ENCODE measurements at regions of chr12 and their contacts with region 1.

Region 1: DNA sequence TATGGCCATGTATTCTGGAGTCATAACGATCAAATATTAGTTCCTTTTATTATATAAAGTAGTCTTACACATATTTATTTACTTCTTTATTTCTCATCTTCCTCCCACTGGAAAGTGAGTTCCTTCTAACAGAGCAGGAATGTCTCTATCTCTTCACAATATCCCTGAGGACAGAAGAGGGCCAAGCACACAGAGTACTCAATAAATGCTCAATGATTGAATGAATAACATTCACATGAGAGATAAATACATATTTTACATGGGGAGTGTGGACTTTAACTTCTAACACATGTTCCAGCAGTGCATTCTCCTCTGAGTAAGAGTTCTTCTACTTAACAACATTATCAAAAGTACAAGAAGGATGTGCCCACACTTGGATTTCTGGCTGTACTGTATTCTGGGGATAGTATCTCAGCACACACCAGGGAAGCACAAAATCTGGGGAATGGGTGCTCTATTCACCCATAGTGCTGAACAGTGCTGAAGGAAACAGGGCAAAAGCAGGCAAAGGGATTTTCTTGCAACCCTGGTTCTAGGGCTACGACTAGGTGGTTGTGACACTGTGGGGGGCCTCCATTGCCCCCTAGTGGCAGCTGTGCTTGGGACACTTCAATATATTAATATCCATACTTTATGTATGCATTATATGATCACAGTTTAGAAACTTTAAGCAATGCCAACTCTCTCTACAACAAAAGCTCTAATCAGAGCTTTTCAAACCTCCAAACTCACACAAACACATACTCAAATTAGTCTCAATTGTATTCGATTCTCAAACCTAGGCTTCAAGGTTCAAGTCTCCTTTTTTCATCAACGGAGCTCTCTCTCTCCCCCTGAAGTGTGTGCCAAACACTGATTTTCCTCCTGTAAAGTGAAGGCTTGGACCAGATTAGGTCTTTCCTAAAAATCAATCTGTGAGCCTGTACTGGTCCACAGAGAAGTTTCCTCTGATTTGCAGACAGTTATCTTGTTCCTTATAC is 115.5 kb downstream of the SLC2A13 start:
- DNase-seq: peak; percentile 18 to 66 (median 59)
- ATAC-seq: peak; percentile 87
- H3K4me3 ChIP-seq: no peak overlapping the region
- H3K4me3 Mint-ChIP-seq: no peak overlapping the region
- H3K27ac ChIP-seq: no peak overlapping the region
- H3K27ac Mint-ChIP-seq: no peak overlapping the region
- H3K4me1 ChIP-seq: no peaks in the 10 kb centered on the region
- H3K4me1 Mint-ChIP-seq: peaks cover 7% of the 10 kb centered on the region
- H3K27me3 ChIP-seq: no peaks in the 10 kb centered on the region
- H3K27me3 Mint-ChIP-seq: no peaks in the 10 kb centered on the region
- CTCF ChIP-seq: peak; percentile 93

Region 2: DNA sequence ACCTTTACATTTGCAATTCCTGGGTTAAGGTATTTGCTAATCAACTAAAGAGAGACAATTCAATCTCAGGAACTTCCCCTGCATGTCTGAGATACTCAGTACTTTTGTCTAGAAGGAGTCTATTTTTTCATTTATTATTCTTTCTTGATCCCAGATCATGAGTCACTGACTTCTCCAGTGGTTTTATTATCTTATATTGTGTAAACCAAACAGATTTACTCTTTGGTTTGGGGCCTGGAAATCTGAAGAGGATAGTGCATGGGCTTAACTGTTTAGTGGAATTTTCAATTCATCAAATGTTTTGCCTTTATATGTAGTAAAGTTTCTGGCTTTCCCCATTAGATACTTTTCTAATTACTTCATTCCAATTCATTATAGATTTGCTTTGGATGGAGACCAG is 1488.4 kb before region 1 on chr12:
- CTCF ChIA-PET with region 1: no interaction called
- POLR2A ChIA-PET with region 1: no interaction called
- intact Hi-C with region 1: no loop called
- DNase-seq: no peak
- ATAC-seq: no peak
- H3K4me3 ChIP-seq: no peak overlapping the region
- H3K4me3 Mint-ChIP-seq: no peak overlapping the region
- H3K27ac ChIP-seq: no peak overlapping the region
- H3K27ac Mint-ChIP-seq: no peak overlapping the region
- H3K4me1 ChIP-seq: no peaks in the 10 kb centered on the region
- H3K4me1 Mint-ChIP-seq: no peaks in the 10 kb centered on the region
- H3K27me3 ChIP-seq: no peaks in the 10 kb centered on the region
- H3K27me3 Mint-ChIP-seq: no peaks in the 10 kb centered on the region
- CTCF ChIP-seq: no peak

Region 3: DNA sequence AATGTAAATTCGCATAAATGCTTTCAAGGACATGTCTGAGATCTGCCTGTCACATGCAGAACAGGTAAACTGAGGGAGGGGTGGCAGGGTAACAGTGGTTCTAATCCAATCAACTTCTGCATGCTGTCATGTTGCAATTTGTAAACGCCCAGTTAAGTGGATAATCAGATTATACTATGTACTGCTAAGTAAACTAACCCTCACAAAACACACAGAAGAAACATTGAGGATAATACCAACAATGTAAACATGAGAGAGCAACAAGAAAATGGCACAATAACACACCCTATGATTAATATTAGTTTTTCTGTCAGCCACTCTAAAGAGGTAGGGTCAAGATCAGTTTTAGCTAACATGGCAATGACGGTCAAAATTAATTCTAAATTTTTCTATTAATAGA is 671.2 kb before region 1 on chr12:
- CTCF ChIA-PET with region 1: interaction called, 11 read pairs
- POLR2A ChIA-PET with region 1: no interaction called
- intact Hi-C with region 1: loop called in 1 of 2 experiments (anchors 2 kb)
- DNase-seq: no peak
- ATAC-seq: no peak
- H3K4me3 ChIP-seq: no peak overlapping the region
- H3K4me3 Mint-ChIP-seq: no peak overlapping the region
- H3K27ac ChIP-seq: no peak overlapping the region
- H3K27ac Mint-ChIP-seq: no peak overlapping the region
- H3K4me1 ChIP-seq: no peaks in the 10 kb centered on the region
- H3K4me1 Mint-ChIP-seq: no peaks in the 10 kb centered on the region
- H3K27me3 ChIP-seq: no peaks in the 10 kb centered on the region
- H3K27me3 Mint-ChIP-seq: no peaks in the 10 kb centered on the region
- CTCF ChIP-seq: no peak

Region 4: GRCh38 chr12:39365364-39366001 is 624.9 kb before region 1 on chr12:
- CTCF ChIA-PET with region 1: no interaction called
- POLR2A ChIA-PET with region 1: no interaction called
- intact Hi-C with region 1: loop called in 1 of 2 experiments (anchors 2 kb)
- DNase-seq: no peak
- ATAC-seq: no peak
- H3K4me3 ChIP-seq: no peak overlapping the region
- H3K4me3 Mint-ChIP-seq: no peak overlapping the region
- H3K27ac ChIP-seq: no peak overlapping the region
- H3K27ac Mint-ChIP-seq: no peak overlapping the region
- H3K4me1 ChIP-seq: no peaks in the 10 kb centered on the region
- H3K4me1 Mint-ChIP-seq: no peaks in the 10 kb centered on the region
- H3K27me3 ChIP-seq: no peaks in the 10 kb centered on the region
- H3K27me3 Mint-ChIP-seq: no peaks in the 10 kb centered on the region
- CTCF ChIP-seq: no peak

Region 5: GRCh38 chr12:39426636-39427245 is 563.7 kb before region 1 on chr12:
- CTCF ChIA-PET with region 1: no interaction called
- POLR2A ChIA-PET with region 1: no interaction called
- intact Hi-C with region 1: no loop called
- DNase-seq: no peak
- ATAC-seq: no peak
- H3K4me3 ChIP-seq: no peak overlapping the region
- H3K4me3 Mint-ChIP-seq: no peak overlapping the region
- H3K27ac ChIP-seq: no peak overlapping the region
- H3K27ac Mint-ChIP-seq: no peak overlapping the region
- H3K4me1 ChIP-seq: no peaks in the 10 kb centered on the region
- H3K4me1 Mint-ChIP-seq: peaks cover 2% of the 10 kb centered on the region
- H3K27me3 ChIP-seq: no peaks in the 10 kb centered on the region
- H3K27me3 Mint-ChIP-seq: no peaks in the 10 kb centered on the region
- CTCF ChIP-seq: no peak

Region 6: DNA sequence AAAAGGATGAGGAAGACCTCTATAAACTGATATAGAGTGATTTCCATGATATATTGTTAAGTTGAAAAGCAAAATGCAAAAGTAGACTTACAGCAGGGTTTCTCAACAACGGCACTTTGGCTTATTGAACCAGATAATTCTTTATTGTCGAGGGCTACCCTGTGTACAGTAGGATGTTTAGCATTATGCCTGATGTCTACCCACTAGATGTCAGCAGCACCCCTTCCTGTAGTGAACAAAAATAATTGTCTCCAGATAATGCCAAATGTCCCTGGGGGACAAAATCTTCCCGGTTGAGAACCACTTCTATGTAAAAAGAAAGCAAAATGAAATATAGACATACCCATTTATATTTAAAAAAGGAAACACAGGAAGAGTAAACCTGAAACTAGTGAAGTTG is 403.2 kb before region 1 on chr12:
- CTCF ChIA-PET with region 1: interaction called, 6 read pairs
- POLR2A ChIA-PET with region 1: no interaction called
- intact Hi-C with region 1: loop called (anchors 1 to 2 kb)
- DNase-seq: peak in 5 of 9 experiments; percentile 1 to 67 (median 19)
- ATAC-seq: peak; percentile 75
- H3K4me3 ChIP-seq: no peak overlapping the region
- H3K4me3 Mint-ChIP-seq: no peak overlapping the region
- H3K27ac ChIP-seq: no peak overlapping the region
- H3K27ac Mint-ChIP-seq: no peak overlapping the region
- H3K4me1 ChIP-seq: no peaks in the 10 kb centered on the region
- H3K4me1 Mint-ChIP-seq: peaks cover 14% of the 10 kb centered on the region
- H3K27me3 ChIP-seq: no peaks in the 10 kb centered on the region
- H3K27me3 Mint-ChIP-seq: no peaks in the 10 kb centered on the region
- CTCF ChIP-seq: peak; percentile 53

Region 7: DNA sequence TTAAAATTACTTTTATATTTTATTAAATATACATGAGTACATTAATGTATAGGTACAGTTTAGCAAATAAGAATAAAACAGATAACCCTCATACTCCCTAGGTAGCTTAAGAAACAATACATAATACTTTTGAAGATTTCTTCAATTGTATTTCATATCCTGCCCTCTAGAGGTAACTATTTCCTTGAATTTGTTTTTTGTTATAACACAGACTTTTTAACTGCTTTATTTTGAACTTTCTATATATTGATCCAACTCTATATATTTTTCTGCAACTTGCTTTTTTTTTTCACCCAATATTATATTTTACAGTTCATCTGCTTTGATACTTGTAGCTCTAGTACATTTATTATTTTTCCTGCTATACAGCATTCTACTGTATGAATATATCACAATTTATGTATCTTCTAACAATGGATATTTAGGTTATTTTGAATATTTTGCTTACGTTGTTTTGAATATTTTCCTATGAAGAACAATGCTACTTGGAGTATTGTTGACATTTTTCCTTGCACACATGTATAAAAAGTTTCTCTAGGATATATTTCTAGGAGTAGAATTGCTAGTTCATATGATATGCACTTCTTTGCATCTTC is 298.1 kb before region 1 on chr12:
- CTCF ChIA-PET with region 1: no interaction called
- POLR2A ChIA-PET with region 1: no interaction called
- intact Hi-C with region 1: loop called in 1 of 2 experiments (anchors 5 kb)
- DNase-seq: peak in 2 of 9 experiments; percentile 23 to 47
- ATAC-seq: peak; percentile 58
- H3K4me3 ChIP-seq: no peak overlapping the region
- H3K4me3 Mint-ChIP-seq: no peak overlapping the region
- H3K27ac ChIP-seq: no peak overlapping the region
- H3K27ac Mint-ChIP-seq: no peak overlapping the region
- H3K4me1 ChIP-seq: peaks cover 7% of the 10 kb centered on the region
- H3K4me1 Mint-ChIP-seq: peaks cover 6% of the 10 kb centered on the region
- H3K27me3 ChIP-seq: no peaks in the 10 kb centered on the region
- H3K27me3 Mint-ChIP-seq: no peaks in the 10 kb centered on the region
- CTCF ChIP-seq: peak; percentile 61

Region 8: GRCh38 chr12:39764944-39765560 is 225.4 kb before region 1 on chr12:
- CTCF ChIA-PET with region 1: interaction called, 3 read pairs
- POLR2A ChIA-PET with region 1: no interaction called
- intact Hi-C with region 1: loop called (anchors 2 to 5 kb)
- DNase-seq: peak in 2 of 9 experiments; percentile 19 to 37
- ATAC-seq: no peak
- H3K4me3 ChIP-seq: no peak overlapping the region
- H3K4me3 Mint-ChIP-seq: no peak overlapping the region
- H3K27ac ChIP-seq: no peak overlapping the region
- H3K27ac Mint-ChIP-seq: no peak overlapping the region
- H3K4me1 ChIP-seq: no peaks in the 10 kb centered on the region
- H3K4me1 Mint-ChIP-seq: no peaks in the 10 kb centered on the region
- H3K27me3 ChIP-seq: no peaks in the 10 kb centered on the region
- H3K27me3 Mint-ChIP-seq: no peaks in the 10 kb centered on the region
- CTCF ChIP-seq: peak; percentile 63

Region 9: DNA sequence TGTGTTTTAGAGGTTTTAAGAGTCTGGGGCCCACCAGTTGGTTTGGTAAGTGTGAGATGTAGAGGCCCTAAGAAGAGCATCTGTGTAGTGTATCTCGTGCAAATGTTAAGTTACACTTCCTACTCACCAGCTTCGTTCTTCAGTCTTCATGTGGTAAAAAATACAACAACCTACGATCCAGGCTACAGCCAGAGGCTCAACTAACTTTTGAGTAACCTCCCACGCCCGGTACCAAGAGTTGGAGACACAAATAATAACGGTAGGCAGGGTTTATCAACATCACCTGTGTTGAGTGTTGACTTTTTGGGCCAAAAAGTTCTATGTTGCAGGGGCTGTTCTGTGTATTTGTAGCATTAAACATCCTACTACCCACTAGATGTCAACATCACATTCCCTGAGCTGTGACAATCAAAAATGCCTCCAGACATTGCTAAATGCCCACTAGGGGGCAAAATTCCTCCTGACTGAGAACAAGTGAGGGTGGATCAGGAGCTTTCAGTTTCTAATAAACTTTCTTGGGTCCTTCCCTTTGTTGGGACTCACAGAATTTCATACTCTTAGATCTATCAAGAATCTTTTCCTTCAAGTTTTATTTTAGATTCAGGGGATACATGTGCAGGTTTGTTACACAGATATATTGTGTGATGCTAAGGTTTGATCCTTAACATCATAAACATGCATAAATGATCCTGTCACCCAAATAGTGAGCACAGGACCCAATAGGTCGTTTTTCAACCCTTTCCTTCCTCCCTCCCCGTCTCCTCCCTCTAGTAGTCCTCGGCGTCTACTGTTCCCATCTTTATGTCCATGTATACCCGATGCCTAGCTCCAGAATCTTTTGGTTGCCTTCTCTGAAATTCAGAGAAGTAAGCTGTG is 20.7 kb after region 1 on chr12:
- CTCF ChIA-PET with region 1: interaction called, 21 read pairs
- POLR2A ChIA-PET with region 1: no interaction called
- intact Hi-C with region 1: no loop called
- DNase-seq: peak in 8 of 9 experiments; percentile 27 to 82 (median 52)
- ATAC-seq: peak; percentile 92
- H3K4me3 ChIP-seq: peak overlapping the region; percentile 18 to 23
- H3K4me3 Mint-ChIP-seq: peak overlapping the region; percentile 74
- H3K27ac ChIP-seq: no peak overlapping the region
- H3K27ac Mint-ChIP-seq: no peak overlapping the region
- H3K4me1 ChIP-seq: peaks cover 5% of the 10 kb centered on the region
- H3K4me1 Mint-ChIP-seq: peaks cover 18% of the 10 kb centered on the region
- H3K27me3 ChIP-seq: no peaks in the 10 kb centered on the region
- H3K27me3 Mint-ChIP-seq: no peaks in the 10 kb centered on the region
- CTCF ChIP-seq: peak; percentile 81

Measured in CD8-positive, alpha-beta T cell (primary cell).